ENCODE measurements at regions of chr1 and their contacts with region 1.

Region 1: GRCh38 chr1:11515368-11516300 is 36.7 kb downstream of the DISP3 start:
- DNase-seq: no peak
- ATAC-seq: no peak
- H3K4me3 ChIP-seq: no peak overlapping the region
- H3K27ac ChIP-seq: no peak overlapping the region
- H3K4me1 ChIP-seq: no peaks in the 10 kb centered on the region
- H3K27me3 ChIP-seq: no peaks in the 10 kb centered on the region
- CTCF ChIP-seq: no peak
- POLR2A ChIP-seq: no peak

Region 2: GRCh38 chr1:11531943-11532342 is 16.3 kb after region 1 on chr1:
- intact Hi-C with region 1: loop called in 1 of 10 experiments (anchors 1 kb)
- DNase-seq: no peak
- ATAC-seq: no peak
- H3K4me3 ChIP-seq: no peak overlapping the region
- H3K27ac ChIP-seq: no peak overlapping the region
- H3K4me1 ChIP-seq: no peaks in the 10 kb centered on the region
- H3K27me3 ChIP-seq: peaks cover 0 to 10% (median 0%) of the 10 kb centered on the region in 9 donors
- CTCF ChIP-seq: no peak
- POLR2A ChIP-seq: no peak

Region 3: DNA sequence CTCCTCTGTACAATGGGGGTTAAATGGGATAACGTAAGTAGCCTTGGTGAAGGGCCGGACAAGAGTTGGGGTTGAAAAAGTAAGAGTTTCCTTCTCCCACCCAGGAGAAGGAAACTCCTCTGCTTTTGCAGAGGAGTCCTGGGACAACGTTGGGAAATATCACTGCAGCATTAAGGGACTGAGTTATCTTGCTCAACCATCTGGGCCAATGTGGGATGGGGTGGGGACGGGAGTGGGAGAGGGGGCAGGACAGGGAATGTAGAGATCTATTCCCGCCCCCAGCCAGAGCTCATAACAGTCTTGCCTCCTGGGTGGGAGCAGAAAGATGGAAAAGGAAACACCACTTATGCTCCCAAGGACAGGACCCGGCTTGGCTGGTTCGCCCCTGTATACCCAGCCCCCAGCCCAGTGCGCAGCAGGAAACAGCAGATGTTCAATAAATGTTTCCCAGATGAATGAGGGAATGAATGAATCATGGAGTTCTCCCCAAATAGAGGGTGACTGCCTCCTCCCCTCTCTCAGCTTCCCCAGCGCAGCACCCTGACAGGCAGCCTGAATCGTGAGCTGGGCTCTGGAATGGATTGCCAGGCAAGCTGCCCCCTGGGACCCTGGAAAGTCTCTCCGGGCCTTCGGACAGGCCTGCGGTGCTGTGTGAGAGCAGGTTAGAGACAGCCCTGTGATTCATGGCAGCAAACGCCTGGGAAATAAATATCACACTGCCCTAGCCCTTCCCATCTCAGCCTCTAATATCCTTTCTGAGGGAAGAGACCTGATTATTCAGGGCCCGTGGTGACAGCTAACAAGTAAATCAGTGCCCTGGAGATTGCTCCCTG is 113.8 kb after region 1 on chr1:
- intact Hi-C with region 1: no loop called
- DNase-seq: no peak
- ATAC-seq: no peak
- H3K4me3 ChIP-seq: no peak overlapping the region
- H3K27ac ChIP-seq: no peak overlapping the region
- H3K4me1 ChIP-seq: no peaks in the 10 kb centered on the region
- H3K27me3 ChIP-seq: peaks cover 0 to 57% (median 13%) of the 10 kb centered on the region in 9 donors
- CTCF ChIP-seq: no peak
- POLR2A ChIP-seq: no peak

Measured in heart left ventricle (tissue), 16 donors.